ENCODE measurements at regions of chr2 and their contacts with region 1.

Region 1: GRCh38 chr2:149587220-149587949 is at the start of gene MMADHC:
- DNase-seq: peak; percentile 76 to 97
- H3K4me3 ChIP-seq: peak within 1 kb of the TSS; percentile 72 to 84
- H3K27ac ChIP-seq: peak within 1 kb of the TSS; percentile 89 to 99
- H3K4me1 ChIP-seq: peaks cover 0 to 16% of the 10 kb centered on the region in 2 donors
- H3K27me3 ChIP-seq: no peaks in the 10 kb centered on the region
- CTCF ChIP-seq: no peak
- total RNA-seq, gene MMADHC: 35.8 TPM

Region 2: DNA sequence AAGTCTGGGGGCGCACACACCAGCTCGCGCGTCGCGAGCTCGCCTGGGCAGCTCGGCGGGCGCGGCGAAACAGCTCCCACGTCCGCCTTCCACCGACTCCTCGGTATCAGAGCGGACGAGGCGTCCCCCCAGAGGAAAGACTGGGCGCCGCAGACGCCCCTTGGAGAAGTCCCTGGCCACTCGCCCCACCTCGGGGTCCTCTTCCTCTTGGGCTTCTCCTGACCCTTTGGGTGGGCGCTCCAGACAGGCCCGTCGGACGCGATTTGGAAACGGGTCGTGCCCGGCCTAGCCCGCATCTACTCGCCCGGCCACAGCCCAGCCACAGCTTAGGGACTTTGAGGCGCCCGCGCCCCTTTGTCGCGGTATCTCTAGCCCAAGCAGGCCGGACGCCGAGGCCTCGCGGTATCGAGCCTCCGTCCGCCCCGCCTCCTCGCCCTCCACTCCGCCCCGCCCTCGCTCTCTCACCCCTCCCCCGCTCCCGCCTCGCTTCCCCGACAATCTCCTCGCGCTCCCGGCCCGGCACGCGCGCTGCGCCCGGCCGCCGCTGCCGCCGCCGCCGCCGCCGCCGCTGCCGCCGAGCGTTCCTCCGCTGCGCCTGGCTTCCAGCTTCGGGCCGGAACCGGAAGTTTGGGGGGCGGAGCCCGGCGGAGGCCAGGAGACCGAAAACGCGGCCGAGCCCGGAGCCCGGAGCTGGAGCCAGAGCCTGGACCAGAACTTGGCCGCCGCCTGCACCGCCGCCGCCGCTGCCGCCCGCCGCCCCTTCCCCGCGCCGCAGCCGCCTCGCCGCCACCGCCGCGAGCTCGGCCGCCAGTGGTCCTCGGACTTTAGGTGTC is 1743.3 kb before region 1 on chr2:
- intact Hi-C with region 1: loop called (anchors 10 kb)
- DNase-seq: peak; percentile 47 to 95
- H3K4me3 ChIP-seq: peak overlapping the region; percentile 83 to 91
- H3K27ac ChIP-seq: peak overlapping the region; percentile 97 to 98
- H3K4me1 ChIP-seq: peaks cover 0 to 16% of the 10 kb centered on the region in 2 donors
- H3K27me3 ChIP-seq: no peaks in the 10 kb centered on the region
- CTCF ChIP-seq: peak in 2 of 3 experiments; percentile 27 to 31

Region 3: DNA sequence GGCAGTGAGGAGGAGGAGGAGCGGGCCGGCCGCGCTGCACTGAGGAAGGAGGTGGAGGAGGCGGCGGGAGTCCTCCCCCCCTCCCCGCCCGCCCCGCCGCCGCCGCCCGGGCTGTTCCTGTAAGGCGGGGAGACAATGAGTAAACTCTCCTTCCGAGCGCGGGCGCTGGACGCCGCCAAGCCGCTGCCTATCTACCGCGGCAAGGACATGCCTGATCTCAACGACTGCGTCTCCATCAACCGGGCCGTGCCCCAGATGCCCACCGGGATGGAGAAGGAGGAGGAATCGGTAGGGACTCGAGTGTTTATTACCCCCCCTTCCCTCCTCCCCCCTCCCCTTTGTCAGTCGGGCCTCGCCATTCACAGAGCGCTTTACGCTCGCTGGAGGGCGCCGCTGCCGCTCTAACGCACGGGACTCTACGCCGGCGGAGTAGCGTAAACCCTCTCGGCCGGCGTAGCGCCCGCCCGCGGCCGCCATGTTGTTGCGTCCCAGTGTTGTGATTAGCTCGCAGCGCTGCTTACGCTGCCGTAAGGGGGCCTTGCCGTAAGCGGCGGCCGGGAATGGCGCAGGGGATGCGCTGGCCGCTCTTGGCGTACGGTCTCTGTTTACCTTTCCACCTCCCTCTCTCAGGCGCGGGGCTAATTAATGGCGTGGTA is 942.4 kb before region 1 on chr2:
- intact Hi-C with region 1: loop called (anchors 10 kb)
- DNase-seq: peak; percentile 75 to 97
- H3K4me3 ChIP-seq: peak overlapping the region; percentile 89 to 98
- H3K27ac ChIP-seq: peak overlapping the region; percentile 99 to 100
- H3K4me1 ChIP-seq: peaks cover 0 to 14% of the 10 kb centered on the region in 2 donors
- H3K27me3 ChIP-seq: no peaks in the 10 kb centered on the region
- CTCF ChIP-seq: peak in 2 of 3 experiments; percentile 23 to 40

Region 4: DNA sequence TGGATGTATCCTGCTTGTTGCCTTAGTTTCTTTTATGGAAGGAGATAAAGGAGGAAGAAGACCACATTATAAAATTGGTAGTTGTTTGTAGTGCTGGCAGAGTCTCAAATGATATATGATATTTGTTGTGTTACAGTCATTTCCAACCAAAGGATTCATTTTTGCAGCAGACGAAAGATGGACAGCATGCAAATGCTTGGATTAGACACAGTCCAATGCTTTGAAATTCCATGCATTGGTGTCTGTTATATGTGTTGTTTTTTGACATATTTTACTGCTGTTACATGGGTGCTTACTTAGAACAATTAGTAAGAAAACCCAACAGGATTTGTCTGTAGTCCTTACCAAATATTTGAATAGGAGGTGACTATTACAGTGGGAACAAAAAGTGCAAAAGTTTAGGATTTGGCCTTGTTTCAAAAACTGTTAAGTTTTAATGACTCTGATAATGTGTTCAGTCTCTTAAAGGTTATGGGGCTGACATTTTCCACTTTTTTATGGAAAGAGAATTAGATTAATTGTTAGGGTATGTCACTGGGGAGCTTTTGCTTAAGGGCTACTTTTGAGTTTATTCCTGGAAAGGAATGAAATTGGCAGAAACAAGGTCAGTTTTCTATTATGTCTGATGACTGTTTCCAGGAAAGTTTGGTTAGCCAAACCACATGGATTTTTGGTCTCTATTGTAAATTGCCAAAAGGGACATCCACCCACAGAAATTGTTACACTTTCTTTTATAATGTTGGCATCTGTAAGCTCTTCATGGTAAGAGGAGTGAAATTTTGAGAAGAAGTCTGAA is 229.6 kb after region 1 on chr2:
- intact Hi-C with region 1: no loop called
- DNase-seq: no peak
- H3K4me3 ChIP-seq: no peak overlapping the region
- H3K27ac ChIP-seq: no peak overlapping the region
- H3K4me1 ChIP-seq: no peaks in the 10 kb centered on the region
- H3K27me3 ChIP-seq: no peaks in the 10 kb centered on the region
- CTCF ChIP-seq: no peak

Region 5: GRCh38 chr2:149994057-149994753 is 406.8 kb after region 1 on chr2:
- intact Hi-C with region 1: loop called (anchors 10 kb)
- DNase-seq: no peak
- H3K4me3 ChIP-seq: no peak overlapping the region
- H3K27ac ChIP-seq: peak overlapping the region; percentile 71 to 81
- H3K4me1 ChIP-seq: peaks cover 0 to 26% of the 10 kb centered on the region in 2 donors
- H3K27me3 ChIP-seq: no peaks in the 10 kb centered on the region
- CTCF ChIP-seq: no peak

Region 6: GRCh38 chr2:150487537-150488429 is 900.4 kb after region 1 on chr2 and contains the start of gene RND3:
- intact Hi-C with region 1: loop called (anchors 2 kb)
- DNase-seq: peak; percentile 86 to 99
- H3K4me3 ChIP-seq: peak within 1 kb of the TSS; percentile 81 to 88
- H3K27ac ChIP-seq: peak within 1 kb of the TSS; percentile 99 to 100
- H3K4me1 ChIP-seq: peaks cover 0 to 15% of the 10 kb centered on the region in 2 donors
- H3K27me3 ChIP-seq: no peaks in the 10 kb centered on the region
- CTCF ChIP-seq: peak; percentile 79 to 86 (median 80)
- total RNA-seq, gene RND3: 10.7 TPM

Region 7: DNA sequence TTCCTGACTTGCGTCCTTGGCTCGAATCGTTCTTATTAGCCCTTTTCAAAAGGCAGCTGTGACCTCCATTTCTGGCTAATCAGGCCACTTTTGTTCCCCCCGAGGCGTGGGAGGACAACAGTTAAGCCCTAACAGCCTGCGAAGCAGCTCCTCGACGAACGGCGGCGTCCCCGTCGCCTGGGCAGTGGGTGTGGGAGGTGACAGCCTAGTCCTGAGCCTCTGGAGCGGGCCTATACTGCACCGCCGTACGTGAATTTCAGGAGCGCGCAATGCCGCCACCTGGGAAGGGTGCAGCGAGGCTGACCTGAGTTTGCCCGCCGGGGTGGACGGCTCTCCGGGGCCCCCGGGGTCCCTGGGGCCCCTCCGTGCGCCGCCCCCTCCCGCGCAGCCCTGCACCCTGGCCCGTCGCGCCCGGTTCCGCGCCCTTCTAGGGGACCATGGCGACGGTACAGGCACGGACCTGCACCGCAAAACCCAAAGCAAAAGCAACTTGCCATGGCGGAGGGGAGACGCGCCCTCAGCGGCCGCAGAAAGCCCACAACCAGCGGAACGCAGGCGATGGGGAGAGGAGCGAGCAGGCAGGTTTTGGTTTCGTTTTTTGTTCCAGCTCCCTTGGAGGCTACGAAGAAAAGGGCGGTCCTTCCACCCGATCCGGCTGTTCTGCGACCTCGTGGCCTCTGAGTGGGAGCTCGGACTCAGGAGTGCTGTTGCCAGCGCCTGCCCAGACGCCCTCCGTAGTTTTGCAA is 1674.0 kb after region 1 on chr2 and contains the start of gene RBM43:
- intact Hi-C with region 1: loop called (anchors 10 kb)
- DNase-seq: peak; percentile 53 to 93
- H3K4me3 ChIP-seq: peak within 1 kb of the TSS; percentile 75 to 84
- H3K27ac ChIP-seq: peak within 1 kb of the TSS; percentile 87 to 96
- H3K4me1 ChIP-seq: peaks cover 0 to 13% of the 10 kb centered on the region in 2 donors
- H3K27me3 ChIP-seq: no peaks in the 10 kb centered on the region
- CTCF ChIP-seq: peak in 1 of 3 experiments; percentile 7
- total RNA-seq, gene RBM43: 0.96 TPM